ENCODE measurements at regions of chr10 and their contacts with region 1.

Region 1: GRCh38 chr10:33010132-33011037 is 52.4 kb upstream of the ITGB1 start:
- DNase-seq: no peak
- CTCF ChIP-seq: no peak

Region 2: GRCh38 chr10:32795598-32796183 is 214.7 kb before region 1 on chr10:
- in situ Hi-C with region 1: loop called (anchors 10 kb)
- DNase-seq: peak; percentile 24
- CTCF ChIP-seq: peak; percentile 52

Region 3: GRCh38 chr10:32877915-32878314 is 132.5 kb before region 1 on chr10:
- in situ Hi-C with region 1: no loop called
- DNase-seq: no peak
- CTCF ChIP-seq: no peak

Region 4: GRCh38 chr10:33134011-33134751 is 123.8 kb after region 1 on chr10:
- in situ Hi-C with region 1: no loop called
- DNase-seq: no peak
- CTCF ChIP-seq: no peak

Region 5: GRCh38 chr10:33279811-33280602 is 269.6 kb after region 1 on chr10:
- in situ Hi-C with region 1: no loop called
- DNase-seq: no peak
- CTCF ChIP-seq: no peak

Measured in GM13976 (cell line).